Activated CD4-positive, alpha-beta memory T cell treated with anti-CD3 and anti-CD28 coated beads for 36 hours (primary cell): ENCODE measurements at regions of chr19 and their contacts with region 1.

Region 1: GRCh38 chr19:2900296-2901252 is at the start of gene ZNF57:
- DNase-seq: peak; percentile 99
- H3K4me3 Mint-ChIP-seq: peak within 1 kb of the TSS; percentile 98
- H3K27ac Mint-ChIP-seq: peak within 1 kb of the TSS; percentile 84
- H3K4me1 Mint-ChIP-seq: peaks cover 20% of the 10 kb centered on the region
- H3K27me3 Mint-ChIP-seq: no peaks in the 10 kb centered on the region
- total RNA-seq, gene ZNF57: 6.7 to 8.3 TPM

Region 2: DNA sequence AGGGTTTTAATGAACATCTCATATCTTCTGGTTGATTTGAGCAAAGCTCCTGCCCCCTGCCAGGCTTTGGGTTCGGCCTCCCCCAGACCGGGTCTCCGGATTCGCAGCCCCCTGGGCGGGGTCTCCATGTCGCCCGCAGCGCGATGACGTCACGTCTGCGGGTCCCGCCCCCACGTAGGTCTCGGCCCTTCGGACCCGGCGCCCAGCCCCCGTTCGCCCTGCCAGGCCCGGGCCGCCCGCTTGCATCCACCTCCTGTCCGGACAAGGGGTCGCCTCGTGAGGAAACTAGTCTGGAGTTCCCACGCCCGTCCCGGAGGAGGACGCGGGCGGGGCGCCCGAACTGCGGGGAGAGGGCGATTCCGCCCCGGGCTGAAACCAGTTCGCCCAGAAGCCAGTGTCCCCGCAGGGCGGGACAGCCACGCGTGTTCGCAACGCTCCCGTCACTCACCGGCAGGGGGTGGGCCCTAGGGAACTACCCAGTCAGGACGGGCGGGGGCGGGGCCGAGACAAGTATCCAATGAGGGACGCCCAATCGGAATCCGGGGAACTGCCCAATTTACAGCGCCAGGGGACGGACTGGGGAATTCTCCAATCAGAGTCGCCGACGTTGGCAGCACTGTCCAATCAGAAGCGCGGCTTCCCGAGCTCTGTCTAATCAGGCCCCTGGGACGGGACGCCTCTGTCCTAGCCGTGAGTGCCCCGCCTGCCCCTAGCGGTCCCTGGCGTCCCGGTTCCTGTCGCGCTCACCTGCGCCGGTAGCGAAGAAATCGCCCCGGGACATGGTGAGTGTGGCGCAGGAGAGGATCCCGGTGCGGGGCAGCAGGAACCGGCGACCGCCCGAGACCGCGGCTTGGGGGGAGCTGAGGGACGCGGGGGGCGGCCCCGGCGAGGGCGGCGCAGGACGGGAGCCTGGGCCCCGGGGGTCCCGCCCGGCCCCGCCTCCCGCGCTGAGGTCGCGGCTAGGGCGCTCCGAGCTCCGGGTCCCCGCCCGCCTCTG is 59.5 kb before region 1 on chr19 and contains the start of gene ZNF555:
- CTCF ChIA-PET with region 1: interaction called, 4 read pairs
- POLR2A ChIA-PET with region 1: no interaction called
- intact Hi-C with region 1: loop called (anchors 5 kb)
- DNase-seq: peak; percentile 99
- H3K4me3 Mint-ChIP-seq: peak within 1 kb of the TSS; percentile 83
- H3K27ac Mint-ChIP-seq: peak within 1 kb of the TSS; percentile 77
- H3K4me1 Mint-ChIP-seq: peaks cover 9% of the 10 kb centered on the region
- H3K27me3 Mint-ChIP-seq: no peaks in the 10 kb centered on the region
- total RNA-seq, gene ZNF555: 3.6 to 3.8 TPM

Region 3: GRCh38 chr19:2912306-2912705 is 11.7 kb after region 1 on chr19:
- CTCF ChIA-PET with region 1: interaction called, 5 read pairs
- POLR2A ChIA-PET with region 1: interaction called, 14 read pairs
- intact Hi-C with region 1: loop called (anchors 1 kb)
- DNase-seq: peak; percentile 71
- H3K4me3 Mint-ChIP-seq: peak overlapping the region; percentile 58
- H3K27ac Mint-ChIP-seq: peak overlapping the region; percentile 94
- H3K4me1 Mint-ChIP-seq: peaks cover 43% of the 10 kb centered on the region
- H3K27me3 Mint-ChIP-seq: no peaks in the 10 kb centered on the region

Region 4: GRCh38 chr19:2944775-2945574 is 44.4 kb after region 1 on chr19 and contains the start of gene ZNF77:
- CTCF ChIA-PET with region 1: no interaction called
- POLR2A ChIA-PET with region 1: no interaction called
- intact Hi-C with region 1: loop called (anchors 2 kb)
- DNase-seq: peak; percentile 99
- H3K4me3 Mint-ChIP-seq: peak within 1 kb of the TSS; percentile 96
- H3K27ac Mint-ChIP-seq: peak within 1 kb of the TSS; percentile 90
- H3K4me1 Mint-ChIP-seq: peaks cover 32% of the 10 kb centered on the region
- H3K27me3 Mint-ChIP-seq: no peaks in the 10 kb centered on the region
- total RNA-seq, gene ZNF77: 4.3 to 4.8 TPM

Region 5: DNA sequence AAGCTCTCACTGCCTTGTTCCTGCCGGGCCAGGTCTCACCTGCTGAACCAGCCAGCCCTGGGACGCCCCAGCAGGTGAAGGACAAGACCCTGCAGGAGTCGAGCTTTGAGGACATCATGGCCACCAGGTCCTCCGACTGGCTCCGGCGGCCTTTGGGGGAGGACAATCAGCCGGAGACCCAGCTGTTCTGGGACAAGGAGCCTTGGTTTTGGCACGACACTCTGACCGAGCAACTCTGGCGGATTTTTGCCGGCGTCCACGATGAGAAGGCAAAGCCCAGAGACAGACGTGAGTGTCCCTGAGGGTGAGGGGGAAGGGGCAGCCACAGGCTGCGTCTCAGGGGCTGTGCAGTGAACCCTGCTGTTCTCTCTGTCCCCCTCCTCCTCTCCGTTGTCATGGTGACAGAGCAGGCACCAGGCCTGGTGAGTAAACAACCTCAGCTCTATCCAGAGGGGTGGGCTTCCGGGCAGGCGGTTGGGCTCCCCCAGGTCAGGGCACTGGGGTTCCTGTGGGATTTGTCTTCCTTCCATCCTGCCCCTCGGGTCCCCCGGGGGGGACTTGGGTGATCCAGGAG is 86.5 kb after region 1 on chr19:
- CTCF ChIA-PET with region 1: no interaction called
- POLR2A ChIA-PET with region 1: no interaction called
- intact Hi-C with region 1: no loop called
- DNase-seq: no peak
- H3K4me3 Mint-ChIP-seq: no peak overlapping the region
- H3K27ac Mint-ChIP-seq: no peak overlapping the region
- H3K4me1 Mint-ChIP-seq: peaks cover 6% of the 10 kb centered on the region
- H3K27me3 Mint-ChIP-seq: peaks cover 10% of the 10 kb centered on the region